Head of caudate nucleus (tissue), 42 donors: ENCODE measurements at regions of chr12 and their contacts with region 1.

Region 1: DNA sequence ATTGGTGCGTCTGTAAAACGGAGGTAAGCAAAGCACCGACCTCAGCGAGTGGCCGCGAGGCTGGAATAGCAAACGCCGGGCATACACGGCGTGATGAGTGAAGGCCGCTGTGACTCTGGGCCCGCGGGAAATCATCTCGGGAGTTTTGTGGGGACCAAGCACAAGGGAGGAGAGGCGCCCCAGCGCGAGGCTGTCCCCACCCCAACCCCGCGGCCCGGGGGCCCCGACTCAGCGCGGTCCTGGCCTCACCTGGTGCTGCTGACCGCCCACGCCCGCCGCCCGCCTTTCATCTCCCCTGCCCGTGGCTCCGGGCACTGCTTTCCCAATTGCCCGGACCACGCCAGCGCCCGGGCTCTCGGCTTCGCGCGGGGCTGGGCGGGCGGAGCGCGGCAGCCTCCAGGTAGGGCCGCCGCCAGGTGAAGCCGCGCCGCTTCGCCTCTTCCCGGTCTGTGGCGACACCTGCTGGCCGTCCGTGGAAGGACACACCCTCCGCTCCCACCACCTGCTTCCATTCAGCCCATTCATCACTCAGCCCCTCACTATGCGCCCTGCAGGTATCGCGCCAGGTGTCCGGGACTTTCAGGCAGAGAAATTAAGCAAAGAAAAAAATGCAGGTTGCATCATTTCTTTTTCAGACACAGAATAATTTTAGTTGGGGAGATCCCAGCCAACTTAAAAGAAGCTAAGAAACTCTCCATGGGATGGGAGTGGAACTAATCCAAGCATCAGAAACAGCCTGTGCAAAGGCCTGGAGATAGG is 360.4 kb downstream of the MED13L start:
- DNase-seq: peak; percentile 35 to 87 (median 69)

Region 2: GRCh38 chr12:114662512-114663177 is 1254.4 kb before region 1 on chr12:
- intact Hi-C with region 1: loop called (anchors 5 kb)
- DNase-seq: peak; percentile 64 to 94 (median 84)